ENCODE measurements at regions of chr17 and their contacts with region 1.

Region 1: DNA sequence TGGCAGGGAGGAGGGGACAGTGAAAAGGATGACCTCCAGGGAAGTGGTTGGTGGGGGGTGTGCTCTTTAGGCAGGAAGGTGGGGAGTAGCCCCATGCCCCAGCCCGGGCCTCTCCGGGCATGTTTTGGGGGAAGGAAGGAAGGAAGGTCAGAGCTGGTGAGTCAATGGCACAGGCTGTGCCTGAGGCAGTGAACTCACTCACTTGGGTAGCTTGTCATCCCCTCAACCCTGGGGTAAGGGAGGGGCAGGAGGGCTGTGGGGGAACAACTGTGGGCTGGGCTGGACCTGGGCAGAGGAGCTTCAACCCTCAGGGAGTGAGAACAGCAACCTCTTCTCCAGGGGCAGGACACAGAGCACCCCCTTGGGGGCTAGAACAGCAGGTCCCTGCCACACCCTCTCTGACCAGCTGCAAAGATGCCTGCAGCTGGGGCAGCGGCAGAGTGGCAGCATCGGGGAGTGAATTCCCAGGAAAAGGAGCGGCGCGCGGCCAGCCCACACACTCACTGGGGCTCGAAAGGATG is 6.3 kb downstream of the CSF3 start:
- DNase-seq: peak; percentile 88
- H3K4me3 Mint-ChIP-seq: no peak overlapping the region
- H3K27ac Mint-ChIP-seq: no peak overlapping the region
- H3K4me1 Mint-ChIP-seq: peaks cover 36% of the 10 kb centered on the region
- H3K27me3 Mint-ChIP-seq: peaks cover 23% of the 10 kb centered on the region
- CTCF ChIP-seq: no peak

Region 2: GRCh38 chr17:39952680-39953470 is 68.6 kb before region 1 on chr17:
- CTCF ChIA-PET with region 1: interaction called, 1,657 read pairs
- intact Hi-C with region 1: no loop called
- DNase-seq: peak; percentile 100
- H3K4me3 Mint-ChIP-seq: peak overlapping the region; percentile 58
- H3K27ac Mint-ChIP-seq: peak overlapping the region; percentile 18
- H3K4me1 Mint-ChIP-seq: peaks cover 42% of the 10 kb centered on the region
- H3K27me3 Mint-ChIP-seq: peaks cover 15% of the 10 kb centered on the region
- CTCF ChIP-seq: no peak

Region 3: DNA sequence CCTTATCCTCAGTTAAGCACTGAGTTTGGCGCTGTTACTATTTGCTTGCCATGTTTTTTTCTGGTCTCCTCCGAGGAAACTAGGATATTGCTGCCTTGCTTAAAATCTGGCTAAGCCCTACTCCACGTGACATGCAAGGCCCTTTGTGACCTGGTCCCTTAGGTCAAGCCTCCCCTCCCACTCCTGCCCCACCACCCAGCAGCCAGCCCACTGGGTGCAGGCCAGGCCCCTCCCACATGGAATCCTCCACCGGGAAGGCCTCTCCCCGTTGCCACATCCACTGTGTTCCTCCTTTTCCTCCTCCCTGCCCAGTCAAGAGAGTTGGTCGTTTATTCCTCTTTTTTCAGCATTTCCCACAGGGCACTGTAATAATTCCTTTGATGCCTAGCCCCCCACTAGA is 24.7 kb before region 1 on chr17:
- CTCF ChIA-PET with region 1: interaction called, 1,657 read pairs
- intact Hi-C with region 1: no loop called
- DNase-seq: no peak
- H3K4me3 Mint-ChIP-seq: no peak overlapping the region
- H3K27ac Mint-ChIP-seq: no peak overlapping the region
- H3K4me1 Mint-ChIP-seq: no peaks in the 10 kb centered on the region
- H3K27me3 Mint-ChIP-seq: no peaks in the 10 kb centered on the region
- CTCF ChIP-seq: no peak

Region 4: DNA sequence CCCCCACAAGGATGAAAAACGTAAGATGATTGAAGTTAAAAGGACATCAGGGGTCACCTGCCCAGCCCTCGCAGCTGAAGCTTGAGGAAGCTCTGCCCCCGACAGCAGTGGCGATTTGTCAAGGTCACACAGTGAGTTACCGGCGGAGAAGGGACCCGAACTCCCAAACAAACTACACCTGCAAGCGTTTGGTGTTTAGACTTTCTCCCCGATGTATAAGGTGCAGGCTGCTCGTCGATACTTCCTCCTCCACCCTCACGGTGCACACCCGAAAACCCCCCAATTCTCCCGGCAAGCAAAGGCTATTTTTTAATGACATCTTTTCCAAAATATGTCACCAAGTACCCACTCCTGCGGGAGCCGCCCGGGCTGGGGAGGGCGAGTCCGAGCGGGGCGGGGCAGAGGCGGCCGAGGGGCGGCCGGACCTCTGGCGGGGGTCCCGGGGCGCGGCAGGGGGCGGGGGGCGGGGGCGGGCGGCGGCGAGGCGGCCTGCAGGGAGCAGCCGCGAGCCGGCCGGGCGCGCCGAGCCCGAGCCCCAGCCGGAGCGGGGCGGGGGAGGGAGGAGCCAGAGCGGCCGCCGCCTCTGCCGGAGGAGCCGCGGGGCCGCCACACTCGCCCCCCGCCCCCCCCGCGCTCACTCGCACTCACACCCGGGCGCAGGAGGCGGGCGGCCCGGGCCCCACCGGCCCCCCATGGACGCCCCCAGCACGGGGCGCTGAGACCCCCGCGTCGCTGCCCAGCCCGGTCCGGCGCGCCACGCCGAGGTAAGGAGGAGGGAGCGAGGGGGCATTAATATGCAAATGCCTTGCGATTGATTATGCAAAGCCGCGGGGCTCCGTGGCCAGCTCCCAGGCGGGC is 41.0 kb after region 1 on chr17 and contains the start of gene THRA:
- CTCF ChIA-PET with region 1: interaction called, 81 read pairs
- intact Hi-C with region 1: no loop called
- DNase-seq: peak; percentile 100
- H3K4me3 Mint-ChIP-seq: peak within 1 kb of the TSS; percentile 54
- H3K27ac Mint-ChIP-seq: peak within 1 kb of the TSS; percentile 27
- H3K4me1 Mint-ChIP-seq: peaks cover 55% of the 10 kb centered on the region
- H3K27me3 Mint-ChIP-seq: peaks cover 52% of the 10 kb centered on the region
- CTCF ChIP-seq: no peak
- total RNA-seq, gene THRA: 107 and 133 TPM in 2 replicates

Region 5: DNA sequence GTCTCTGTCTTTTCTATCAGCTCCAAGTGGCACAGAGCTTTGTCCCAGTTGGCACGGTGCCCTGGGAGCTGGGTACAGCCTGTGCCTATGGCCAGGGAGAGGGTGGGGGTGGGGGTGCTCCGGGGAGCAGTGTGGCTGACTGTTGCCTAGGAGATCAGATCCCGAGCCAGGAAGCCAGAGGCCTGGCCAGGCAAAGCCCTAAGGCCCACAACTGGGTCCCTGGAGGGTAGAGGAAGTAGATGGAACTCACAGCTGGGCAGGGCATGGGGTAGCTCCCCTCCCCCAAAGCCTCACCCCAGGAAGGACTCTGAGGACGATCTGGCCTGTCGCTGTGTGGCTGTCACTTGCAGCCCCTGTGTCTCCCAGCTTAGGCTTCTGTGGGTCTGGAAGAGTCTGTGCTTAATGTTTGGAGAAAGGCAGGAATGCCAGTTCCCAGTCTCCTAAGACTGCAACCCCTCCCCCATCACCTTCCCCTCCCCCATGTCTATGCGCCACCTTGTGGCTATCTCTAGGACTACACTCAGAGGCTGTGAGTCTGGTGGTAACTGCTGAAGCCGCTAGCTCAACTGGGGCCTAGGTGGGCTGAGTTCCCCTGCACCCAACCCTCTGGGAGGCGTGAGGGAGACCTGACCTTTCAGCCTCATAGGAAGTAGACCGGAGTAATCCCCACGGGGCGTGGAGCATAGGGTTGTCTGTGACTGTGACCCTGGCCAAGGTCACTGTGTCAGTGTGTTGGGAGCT is 53.9 kb after region 1 on chr17:
- CTCF ChIA-PET with region 1: interaction called, 154 read pairs
- intact Hi-C with region 1: no loop called
- DNase-seq: peak; percentile 98
- H3K4me3 Mint-ChIP-seq: peak overlapping the region; percentile 14
- H3K27ac Mint-ChIP-seq: peak overlapping the region; percentile 6
- H3K4me1 Mint-ChIP-seq: peaks cover 70% of the 10 kb centered on the region
- H3K27me3 Mint-ChIP-seq: no peaks in the 10 kb centered on the region
- CTCF ChIP-seq: no peak

Region 6: DNA sequence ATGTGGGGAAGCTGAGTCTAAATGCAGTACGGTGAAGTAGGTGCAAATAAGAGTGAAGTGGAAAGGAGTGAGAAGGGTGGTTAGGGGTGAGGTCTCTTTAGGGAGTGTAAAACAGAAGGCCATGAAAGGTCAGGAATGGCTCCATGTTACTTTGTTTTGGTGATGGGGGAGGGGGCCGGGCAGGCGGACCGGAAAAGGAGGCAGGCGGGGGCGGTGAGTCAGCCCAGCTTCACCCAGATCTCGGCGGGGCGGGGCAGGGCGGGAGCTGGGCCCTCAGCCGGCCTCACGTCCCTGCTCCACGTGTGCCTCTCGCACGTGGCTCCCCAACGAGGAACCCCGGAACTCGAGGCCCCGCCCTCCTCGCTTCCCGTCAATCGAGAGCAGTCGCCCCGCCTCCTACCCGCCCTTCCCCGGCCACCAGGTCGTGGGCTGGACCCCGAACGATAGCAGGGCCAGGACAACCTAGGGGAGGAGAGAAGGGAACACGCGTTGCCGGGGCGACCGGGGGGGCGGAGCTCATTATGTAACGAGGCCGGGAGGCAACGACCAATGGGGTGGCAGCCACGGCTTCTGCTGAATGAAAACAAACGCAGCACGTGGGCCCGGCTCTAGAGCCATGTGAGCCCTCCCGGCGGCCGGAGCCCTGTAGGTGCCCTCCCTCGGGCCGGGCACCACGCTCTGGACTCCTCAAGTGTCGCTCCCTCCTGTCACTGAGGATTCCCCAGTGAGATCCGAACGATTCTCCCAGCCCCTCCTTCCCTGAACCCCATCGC is 77.5 kb after region 1 on chr17:
- CTCF ChIA-PET with region 1: interaction called, 139 read pairs
- intact Hi-C with region 1: no loop called
- DNase-seq: peak; percentile 100
- H3K4me3 Mint-ChIP-seq: peak overlapping the region; percentile 80
- H3K27ac Mint-ChIP-seq: peak overlapping the region; percentile 85
- H3K4me1 Mint-ChIP-seq: peaks cover 73% of the 10 kb centered on the region
- H3K27me3 Mint-ChIP-seq: no peaks in the 10 kb centered on the region
- CTCF ChIP-seq: no peak

Measured in Calu3 (cell line).